ENCODE measurements at regions of chr2 and their contacts with region 1.

Region 1: DNA sequence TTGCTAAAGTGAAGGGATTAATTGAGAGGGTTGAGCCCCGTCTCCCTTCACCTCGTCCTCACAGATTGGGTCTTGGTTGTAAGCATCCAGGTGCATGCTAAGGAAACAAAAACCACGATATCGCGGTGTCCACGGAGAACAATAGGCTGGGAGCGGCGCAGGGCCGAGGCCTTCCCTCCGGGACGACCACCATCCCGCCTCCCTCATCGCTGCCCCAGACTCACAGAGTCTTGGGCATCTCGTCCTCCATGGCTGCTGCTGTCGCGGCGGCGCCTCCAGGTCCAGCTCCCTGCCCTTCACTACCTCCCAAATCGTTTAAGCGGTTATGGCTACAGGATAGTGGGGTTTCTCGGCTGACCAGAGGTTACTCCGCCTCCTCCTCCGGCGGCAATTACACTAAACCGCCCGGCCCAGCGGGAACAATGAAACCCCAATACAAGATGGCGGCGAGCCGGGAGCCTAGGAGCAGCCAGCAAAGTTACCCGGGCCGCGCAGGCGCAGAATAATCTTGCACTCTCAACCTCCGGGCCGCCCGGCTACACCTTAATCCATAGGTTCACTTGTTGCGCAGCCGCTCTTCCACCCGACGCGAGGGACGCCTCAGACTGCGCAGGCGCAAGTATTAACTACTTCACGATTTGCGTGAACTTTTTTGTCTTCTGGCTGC is at the start of gene TIA1:
- DNase-seq: peak; percentile 99
- ATAC-seq: peak; percentile 98
- H3K4me3 Mint-ChIP-seq: peak within 1 kb of the TSS; percentile 98
- H3K27ac Mint-ChIP-seq: peak within 1 kb of the TSS; percentile 97
- H3K4me1 Mint-ChIP-seq: peaks cover 30% of the 10 kb centered on the region
- H3K27me3 Mint-ChIP-seq: no peaks in the 10 kb centered on the region
- total RNA-seq, gene TIA1: 85.4 to 98.3 TPM

Region 2: GRCh38 chr2:70258532-70258874 is 10.2 kb after region 1 on chr2:
- CTCF ChIA-PET with region 1: interaction called, 9 read pairs
- POLR2A ChIA-PET with region 1: interaction called, 7 read pairs
- intact Hi-C with region 1: loop called (anchors 1 kb)
- DNase-seq: no peak
- ATAC-seq: no peak
- H3K4me3 Mint-ChIP-seq: peak overlapping the region; percentile 80
- H3K27ac Mint-ChIP-seq: no peak overlapping the region
- H3K4me1 Mint-ChIP-seq: peaks cover 31% of the 10 kb centered on the region
- H3K27me3 Mint-ChIP-seq: no peaks in the 10 kb centered on the region

Measured in activated CD4-positive, alpha-beta T cell treated with anti-CD3 and anti-CD28 coated beads for 36 hours (primary cell).